ENCODE measurements at regions of chr11 and their contacts with region 1.

Region 1: DNA sequence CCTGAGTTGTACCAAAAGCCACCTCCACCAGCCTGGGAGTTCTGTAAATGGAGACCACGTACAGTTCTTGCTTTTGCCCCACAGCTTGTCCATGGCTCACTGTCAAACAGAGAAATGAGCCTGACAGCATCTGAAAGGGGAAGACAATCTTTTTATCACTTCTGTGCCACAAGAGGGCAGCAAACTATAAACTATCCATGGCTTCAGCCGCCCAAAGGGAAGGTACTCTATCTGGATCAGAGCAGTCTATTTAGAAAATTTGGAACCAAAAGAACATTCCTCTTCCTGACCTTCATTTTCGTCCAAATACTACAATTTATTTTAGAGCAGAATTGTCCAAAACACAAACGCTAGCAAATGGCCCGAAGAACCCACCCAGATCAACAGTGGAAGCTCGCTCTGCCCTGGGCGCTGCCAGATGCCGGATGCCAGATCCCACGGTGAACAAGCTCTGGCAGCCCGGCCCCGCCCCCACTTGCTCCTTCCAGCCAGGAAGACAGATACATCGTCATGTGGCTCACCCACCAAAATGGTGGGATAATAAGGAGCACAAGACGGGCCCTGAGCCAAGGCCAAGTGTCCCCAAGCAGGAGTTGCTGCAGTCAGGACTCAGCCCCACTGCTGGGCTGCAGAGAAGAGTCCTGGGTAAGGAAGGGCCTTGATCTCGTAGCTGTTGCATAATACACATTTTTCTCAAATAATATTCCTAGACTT is 23.9 kb upstream of the SCGB1A1 start:
- DNase-seq: peak; percentile 93
- H3K4me3 ChIP-seq: peak overlapping the region; percentile 42
- H3K27ac ChIP-seq: no peak overlapping the region
- H3K4me1 ChIP-seq: no peaks in the 10 kb centered on the region
- H3K27me3 ChIP-seq: no peaks in the 10 kb centered on the region
- CTCF ChIP-seq: peak; percentile 87

Region 2: DNA sequence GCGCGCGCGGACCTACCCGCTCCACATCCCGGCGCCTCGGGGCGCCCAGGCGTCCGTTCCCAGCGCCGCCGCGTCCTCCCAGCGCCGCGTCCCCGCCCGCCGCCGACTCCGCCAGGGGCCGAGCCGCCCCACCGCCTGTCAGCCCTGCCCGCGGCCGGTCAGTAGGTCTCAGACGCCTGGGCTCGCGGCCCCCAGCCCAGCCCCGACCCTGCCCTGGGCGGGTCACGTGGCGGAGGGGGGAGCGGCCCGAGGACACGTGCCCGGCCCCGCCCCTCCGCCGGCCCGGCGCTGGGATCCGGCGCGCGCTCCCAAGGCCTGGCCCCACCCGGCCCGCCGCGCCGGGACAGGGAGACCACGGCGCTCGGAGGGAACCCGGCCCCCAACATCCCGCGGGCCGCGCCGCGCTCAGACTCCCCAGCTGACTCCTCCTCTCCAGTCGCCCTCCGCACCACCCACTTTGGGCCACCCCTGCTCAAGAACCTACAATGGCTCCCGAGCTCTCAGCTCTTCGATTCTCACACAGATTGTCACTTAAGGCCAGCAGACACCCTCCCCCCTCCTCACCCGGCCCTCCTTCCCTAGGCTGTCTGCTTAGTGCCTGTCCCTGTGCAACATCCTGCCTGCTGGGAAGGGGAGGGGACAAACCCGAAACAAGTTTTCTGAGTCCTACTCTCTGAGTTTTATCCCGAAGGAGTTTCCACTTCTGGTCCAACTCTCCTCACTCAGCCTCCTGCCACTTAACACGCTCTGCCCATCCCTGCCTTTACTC is 477.5 kb before region 1 on chr11 and contains the start of gene RAB3IL1:
- CTCF ChIA-PET with region 1: no interaction called
- POLR2A ChIA-PET with region 1: no interaction called
- intact Hi-C with region 1: no loop called
- DNase-seq: peak; percentile 72
- H3K4me3 ChIP-seq: peak within 1 kb of the TSS; percentile 70
- H3K27ac ChIP-seq: peak within 1 kb of the TSS; percentile 22
- H3K4me1 ChIP-seq: peaks cover 20% of the 10 kb centered on the region
- H3K27me3 ChIP-seq: no peaks in the 10 kb centered on the region
- CTCF ChIP-seq: no peak
- total RNA-seq, gene RAB3IL1: 21.9 and 26.9 TPM in 2 replicates

Region 3: GRCh38 chr11:62406034-62406433 is 11.1 kb after region 1 on chr11:
- CTCF ChIA-PET with region 1: interaction called, 10 read pairs
- POLR2A ChIA-PET with region 1: no interaction called
- intact Hi-C with region 1: no loop called
- DNase-seq: no peak
- H3K4me3 ChIP-seq: no peak overlapping the region
- H3K27ac ChIP-seq: no peak overlapping the region
- H3K4me1 ChIP-seq: no peaks in the 10 kb centered on the region
- H3K27me3 ChIP-seq: no peaks in the 10 kb centered on the region
- CTCF ChIP-seq: no peak

Region 4: DNA sequence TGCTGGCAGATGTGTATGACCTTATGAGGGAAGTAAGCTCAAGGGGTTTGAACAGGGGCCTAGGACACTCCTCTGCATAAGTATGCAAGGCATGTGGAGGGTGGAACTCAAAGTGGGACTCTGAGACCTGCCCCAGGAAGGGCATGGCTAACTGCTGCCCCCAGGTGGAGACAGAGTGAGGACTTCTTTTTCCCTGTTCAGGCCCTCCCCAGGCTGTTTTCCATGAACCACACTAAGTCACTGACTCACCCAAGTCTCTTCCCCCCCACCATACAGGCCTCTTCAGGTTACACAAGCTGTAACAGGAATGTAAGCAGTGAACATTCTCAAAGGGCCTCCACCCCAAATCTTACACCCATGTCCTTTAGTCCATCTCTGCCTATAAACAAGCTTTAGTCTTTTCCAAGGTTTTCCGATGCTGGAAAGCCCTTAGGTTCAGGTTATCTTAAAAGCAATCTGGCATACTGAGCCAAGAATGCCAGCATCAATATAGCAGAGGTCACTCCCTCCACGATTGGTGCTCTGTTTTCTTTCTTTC is 165.7 kb after region 1 on chr11:
- CTCF ChIA-PET with region 1: interaction called, 15 read pairs
- POLR2A ChIA-PET with region 1: no interaction called
- intact Hi-C with region 1: loop called (anchors 2 kb)
- DNase-seq: peak; percentile 96
- H3K4me3 ChIP-seq: no peak overlapping the region
- H3K27ac ChIP-seq: peak overlapping the region; percentile 24
- H3K4me1 ChIP-seq: peaks cover 48% of the 10 kb centered on the region
- H3K27me3 ChIP-seq: no peaks in the 10 kb centered on the region
- CTCF ChIP-seq: peak; percentile 84

Region 5: GRCh38 chr11:62705880-62706849 is 311.2 kb after region 1 on chr11:
- CTCF ChIA-PET with region 1: no interaction called
- POLR2A ChIA-PET with region 1: no interaction called
- intact Hi-C with region 1: loop called (anchors 5 kb)
- DNase-seq: peak; percentile 99
- H3K4me3 ChIP-seq: peak overlapping the region; percentile 65
- H3K27ac ChIP-seq: peak overlapping the region; percentile 75
- H3K4me1 ChIP-seq: peaks cover 38% of the 10 kb centered on the region
- H3K27me3 ChIP-seq: no peaks in the 10 kb centered on the region
- CTCF ChIP-seq: no peak

Measured in A673 (cell line).